Gastrocnemius medialis (tissue), 4 donors: ENCODE measurements at regions of chr7 and their contacts with region 1.

Region 1: GRCh38 chr7:75951511-75951917 is 36.6 kb downstream of the POR start:
- DNase-seq: peak; percentile 81 to 87
- ATAC-seq: peak; percentile 84 to 87
- H3K4me3 ChIP-seq: no peak overlapping the region
- H3K27ac ChIP-seq: peak overlapping the region; percentile 73 to 90 (median 80)
- H3K4me1 ChIP-seq: peaks cover 54 to 63% of the 10 kb centered on the region in 2 donors
- H3K27me3 ChIP-seq: no peaks in the 10 kb centered on the region
- CTCF ChIP-seq: peak in 1 of 5 experiments; percentile 42
- POLR2A ChIP-seq: peak; percentile 23 to 41

Region 2: GRCh38 chr7:75663302-75663907 is 288.1 kb before region 1 on chr7:
- in situ Hi-C with region 1: no loop called
- intact Hi-C with region 1: no loop called
- DNase-seq: no peak
- ATAC-seq: no peak
- H3K4me3 ChIP-seq: no peak overlapping the region
- H3K27ac ChIP-seq: no peak overlapping the region
- H3K4me1 ChIP-seq: no peaks in the 10 kb centered on the region
- H3K27me3 ChIP-seq: no peaks in the 10 kb centered on the region
- CTCF ChIP-seq: no peak
- POLR2A ChIP-seq: no peak

Region 3: DNA sequence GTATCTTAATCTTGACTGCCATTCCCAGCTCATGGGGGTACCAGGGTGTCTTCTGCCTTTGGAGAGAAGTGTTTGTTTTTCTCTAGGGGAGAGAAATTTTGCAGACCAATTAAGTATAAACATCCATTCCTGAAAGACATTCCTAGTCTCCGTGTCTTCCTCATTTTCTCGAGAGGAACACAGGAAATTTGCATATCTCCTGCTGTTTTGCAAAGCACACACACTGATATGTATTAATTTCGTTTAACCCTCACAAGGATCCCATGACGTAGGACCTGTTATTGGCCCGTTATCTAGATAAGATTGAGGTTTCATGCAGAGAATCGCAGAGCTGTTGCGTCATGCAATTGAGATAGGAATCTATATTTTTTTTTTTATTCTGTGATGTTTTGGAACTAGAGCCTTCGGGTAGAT is 71.7 kb before region 1 on chr7:
- in situ Hi-C with region 1: no loop called
- intact Hi-C with region 1: no loop called
- DNase-seq: no peak
- ATAC-seq: no peak
- H3K4me3 ChIP-seq: peak overlapping the region; percentile 75 to 95 (median 86)
- H3K27ac ChIP-seq: peak overlapping the region in 3 of 4 donors; percentile 75 to 82 (median 76)
- H3K4me1 ChIP-seq: peaks cover 19% of the 10 kb centered on the region in 2 donors
- H3K27me3 ChIP-seq: no peaks in the 10 kb centered on the region
- CTCF ChIP-seq: no peak
- POLR2A ChIP-seq: no peak

Region 4: DNA sequence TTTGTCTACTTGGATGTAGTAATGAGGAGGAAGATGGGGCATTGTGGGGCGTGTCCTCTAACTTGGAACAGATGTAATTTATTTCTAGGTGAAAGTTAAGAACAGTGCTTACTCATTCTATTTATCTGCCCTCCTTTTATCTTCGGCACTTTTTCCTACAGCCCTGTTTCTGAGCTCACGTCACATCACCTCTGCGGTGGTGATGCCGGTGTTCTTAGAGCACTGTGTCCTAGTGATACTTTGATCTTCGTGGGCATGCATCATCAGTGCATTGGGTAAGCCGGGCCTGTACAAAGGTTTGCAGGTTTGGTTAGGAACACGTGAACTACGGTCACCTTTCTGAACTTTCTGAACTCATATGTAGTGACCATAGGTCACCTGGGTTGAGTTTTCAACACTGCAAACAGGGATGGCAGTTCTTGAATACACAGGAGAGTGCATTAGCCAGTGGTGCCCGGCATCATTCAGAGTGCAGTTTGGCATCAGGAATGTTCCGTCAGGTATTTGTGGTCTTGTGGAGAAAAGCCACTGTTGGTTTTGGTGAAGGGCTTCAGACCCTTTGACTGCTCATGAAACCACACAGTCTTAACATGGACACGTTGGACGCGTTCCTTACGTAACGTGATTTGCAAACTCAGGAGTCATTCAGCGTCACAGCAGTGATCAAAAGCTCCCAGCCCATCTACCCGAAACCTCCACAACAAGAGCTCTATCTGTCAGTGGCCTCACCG is 30.9 kb before region 1 on chr7:
- in situ Hi-C with region 1: no loop called
- intact Hi-C with region 1: loop called (anchors 2 kb)
- DNase-seq: peak; percentile 56 to 63
- ATAC-seq: peak; percentile 73 to 84
- H3K4me3 ChIP-seq: no peak overlapping the region
- H3K27ac ChIP-seq: peak overlapping the region; percentile 67 to 81 (median 70)
- H3K4me1 ChIP-seq: peaks cover 54 to 73% of the 10 kb centered on the region in 2 donors
- H3K27me3 ChIP-seq: no peaks in the 10 kb centered on the region
- CTCF ChIP-seq: no peak
- POLR2A ChIP-seq: no peak